Aorta (tissue), 5 donors: ENCODE measurements at regions of chr1 and their contacts with region 1.

Region 1: GRCh38 chr1:153796791-153797659 is 21.8 kb downstream of the SLC27A3 start:
- DNase-seq: peak; percentile 83 to 87
- ATAC-seq: peak; percentile 71
- H3K4me3 ChIP-seq: no peak overlapping the region
- H3K27ac ChIP-seq: no peak overlapping the region
- H3K4me1 ChIP-seq: no peaks in the 10 kb centered on the region
- H3K27me3 ChIP-seq: no peaks in the 10 kb centered on the region

Region 2: GRCh38 chr1:152942161-152942560 is 854.9 kb before region 1 on chr1:
- intact Hi-C with region 1: no loop called
- DNase-seq: no peak
- ATAC-seq: no peak
- H3K4me3 ChIP-seq: no peak overlapping the region
- H3K27ac ChIP-seq: no peak overlapping the region
- H3K4me1 ChIP-seq: no peaks in the 10 kb centered on the region
- H3K27me3 ChIP-seq: no peaks in the 10 kb centered on the region

Region 3: GRCh38 chr1:153832293-153832692 is 35.3 kb after region 1 on chr1:
- intact Hi-C with region 1: no loop called
- DNase-seq: no peak
- ATAC-seq: no peak
- H3K4me3 ChIP-seq: no peak overlapping the region
- H3K27ac ChIP-seq: no peak overlapping the region
- H3K4me1 ChIP-seq: no peaks in the 10 kb centered on the region
- H3K27me3 ChIP-seq: no peaks in the 10 kb centered on the region

Region 4: DNA sequence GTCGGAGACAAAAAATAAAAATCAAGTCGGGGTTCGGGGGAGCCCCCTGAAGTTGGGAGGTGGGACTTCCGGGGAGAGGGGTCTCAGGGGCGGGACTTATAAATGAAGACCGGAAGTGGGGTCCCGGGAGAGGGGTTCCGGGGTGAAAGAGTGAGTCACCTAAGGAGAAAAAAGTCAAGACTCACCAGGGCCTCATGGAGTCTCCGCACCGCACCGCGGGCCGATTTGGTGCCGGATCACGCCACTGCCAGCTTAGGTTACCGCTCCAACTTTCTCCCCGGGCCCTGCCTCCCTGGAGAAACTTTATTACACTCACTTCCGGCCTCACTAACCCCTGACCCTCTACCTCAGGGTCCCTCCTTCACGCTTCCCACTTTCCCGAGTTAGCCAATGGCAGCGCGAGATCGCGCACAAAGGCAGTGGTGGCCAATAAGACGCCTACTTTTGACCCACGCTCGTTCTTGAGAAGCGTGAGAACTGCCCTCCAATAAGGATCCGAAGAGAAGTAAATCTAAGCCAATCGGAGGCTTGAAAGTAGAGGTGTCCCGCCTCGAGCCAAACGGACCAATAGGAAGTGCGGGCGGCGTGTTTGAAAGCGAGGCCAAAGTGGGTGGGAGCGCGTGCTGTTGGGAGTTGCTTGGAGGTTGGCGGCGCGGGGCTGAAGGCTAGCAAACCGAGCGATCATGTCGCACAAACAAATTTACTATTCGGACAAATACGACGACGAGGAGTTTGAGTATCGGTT is 1177.2 kb after region 1 on chr1 and contains the start of gene CKS1B:
- intact Hi-C with region 1: loop called in 1 of 2 experiments (anchors 10 kb)
- DNase-seq: peak; percentile 98
- ATAC-seq: peak; percentile 92
- H3K4me3 ChIP-seq: peak within 1 kb of the TSS; percentile 81 to 89
- H3K27ac ChIP-seq: peak within 1 kb of the TSS; percentile 72 to 86
- H3K4me1 ChIP-seq: no peaks in the 10 kb centered on the region
- H3K27me3 ChIP-seq: no peaks in the 10 kb centered on the region
- total RNA-seq, gene CKS1B: 19.3 to 25.5 TPM